ENCODE measurements at regions of chr7 and their contacts with region 1.

Region 1: GRCh38 chr7:151759591-151760042 is 117.3 kb downstream of the PRKAG2 start:
- DNase-seq: no peak
- ATAC-seq: peak; percentile 70
- H3K4me3 Mint-ChIP-seq: no peak overlapping the region
- H3K27ac Mint-ChIP-seq: no peak overlapping the region
- H3K4me1 Mint-ChIP-seq: peaks cover 11% of the 10 kb centered on the region
- H3K27me3 Mint-ChIP-seq: no peaks in the 10 kb centered on the region
- CTCF ChIP-seq: no peak

Region 2: DNA sequence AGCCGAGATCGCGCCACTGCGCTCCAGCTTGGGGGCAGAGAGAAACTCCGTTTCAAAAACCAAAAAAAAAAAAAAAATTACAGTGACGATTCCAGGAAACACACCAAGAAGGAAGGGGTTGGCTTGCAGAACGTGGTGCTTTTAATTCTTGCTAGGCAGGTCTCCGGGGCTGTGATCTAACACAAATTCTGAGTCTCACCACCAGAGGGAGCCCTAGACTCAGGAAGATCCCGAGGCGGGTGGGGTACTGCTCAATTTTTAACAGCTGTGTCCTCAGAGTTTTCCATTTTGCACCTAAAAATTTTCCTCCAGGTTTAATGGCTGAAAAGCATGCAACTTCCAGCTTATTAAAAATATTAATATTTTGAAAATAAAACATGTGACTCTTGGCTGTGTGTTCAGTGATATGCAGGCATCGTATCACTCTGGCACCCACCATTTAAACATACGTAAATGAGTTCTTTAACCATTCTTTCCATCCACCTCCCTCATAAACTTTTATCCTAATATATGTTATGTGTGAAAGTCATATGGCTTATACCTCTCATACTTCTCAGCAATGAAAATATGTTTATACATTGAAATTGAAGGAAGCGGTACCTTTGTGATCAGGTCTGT is 444.5 kb before region 1 on chr7:
- CTCF ChIA-PET with region 1: interaction called, 7 read pairs
- POLR2A ChIA-PET with region 1: interaction called, 3 read pairs
- intact Hi-C with region 1: loop called (anchors 1 kb)
- DNase-seq: peak; percentile 41
- ATAC-seq: peak; percentile 87
- H3K4me3 Mint-ChIP-seq: no peak overlapping the region
- H3K27ac Mint-ChIP-seq: no peak overlapping the region
- H3K4me1 Mint-ChIP-seq: peaks cover 2% of the 10 kb centered on the region
- H3K27me3 Mint-ChIP-seq: no peaks in the 10 kb centered on the region
- CTCF ChIP-seq: no peak

Region 3: GRCh38 chr7:151448261-151449252 is 311.1 kb before region 1 on chr7:
- CTCF ChIA-PET with region 1: interaction called, 11 read pairs
- POLR2A ChIA-PET with region 1: no interaction called
- intact Hi-C with region 1: loop called (anchors 1 kb)
- DNase-seq: peak; percentile 70
- ATAC-seq: peak; percentile 86
- H3K4me3 Mint-ChIP-seq: peak overlapping the region; percentile 79
- H3K27ac Mint-ChIP-seq: no peak overlapping the region
- H3K4me1 Mint-ChIP-seq: peaks cover 3% of the 10 kb centered on the region
- H3K27me3 Mint-ChIP-seq: peaks cover 14% of the 10 kb centered on the region
- CTCF ChIP-seq: no peak

Region 4: DNA sequence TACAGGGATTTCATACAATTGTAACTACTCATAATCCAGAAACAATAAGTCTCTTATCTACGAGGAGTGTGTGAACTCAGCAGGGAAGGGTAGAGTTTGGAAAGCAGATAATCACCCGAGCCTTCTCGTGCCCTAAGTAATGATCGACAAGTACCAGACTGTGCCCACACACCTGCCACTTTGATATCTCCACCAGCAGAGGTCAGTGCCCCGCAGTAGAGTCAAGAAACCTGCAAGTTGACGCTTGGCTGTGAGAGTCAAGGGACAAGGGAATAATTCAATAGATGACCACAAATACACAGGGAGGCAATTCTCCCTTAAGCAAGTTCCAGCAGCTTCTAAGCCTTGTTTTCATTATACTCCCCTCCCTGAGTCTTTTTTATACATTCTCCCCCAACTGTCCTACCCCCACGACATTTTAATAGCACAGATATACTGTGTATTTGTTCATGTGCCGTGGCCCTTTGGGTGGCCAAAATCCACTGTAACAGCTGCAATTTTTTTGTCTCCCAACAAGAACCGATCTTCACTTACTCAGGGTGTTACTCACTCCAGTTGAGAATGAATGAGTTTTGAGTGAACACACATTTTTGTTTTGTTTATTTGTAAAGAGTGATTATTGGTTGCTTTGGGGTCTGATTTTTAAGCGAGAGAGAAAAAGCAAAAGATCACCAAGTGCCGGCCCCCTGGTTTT is 133.0 kb before region 1 on chr7:
- CTCF ChIA-PET with region 1: interaction called, 21 read pairs
- POLR2A ChIA-PET with region 1: no interaction called
- intact Hi-C with region 1: loop called (anchors 1 kb)
- DNase-seq: no peak
- ATAC-seq: peak; percentile 50
- H3K4me3 Mint-ChIP-seq: no peak overlapping the region
- H3K27ac Mint-ChIP-seq: no peak overlapping the region
- H3K4me1 Mint-ChIP-seq: peaks cover 11% of the 10 kb centered on the region
- H3K27me3 Mint-ChIP-seq: no peaks in the 10 kb centered on the region
- CTCF ChIP-seq: no peak

Region 5: DNA sequence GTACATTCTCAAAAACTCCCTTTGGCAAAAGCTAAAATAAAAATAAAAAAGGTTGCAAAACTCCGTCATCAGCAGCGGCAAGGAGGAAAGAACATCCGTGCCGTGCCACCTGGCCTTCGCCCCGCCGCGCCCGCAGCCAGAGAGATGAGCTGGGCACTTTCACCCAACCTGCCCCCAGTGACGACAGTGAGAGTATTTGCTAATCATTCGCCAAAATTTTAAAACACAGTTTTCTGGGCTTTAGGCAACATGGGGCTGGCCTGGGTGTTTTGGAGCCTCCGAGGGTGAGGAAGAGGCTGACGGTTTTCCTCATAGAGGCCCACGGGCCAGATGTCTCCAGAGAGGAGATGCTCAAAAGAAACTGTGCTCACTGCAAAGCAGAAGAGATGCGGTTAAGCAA is 10.9 kb before region 1 on chr7:
- CTCF ChIA-PET with region 1: interaction called, 12 read pairs
- POLR2A ChIA-PET with region 1: interaction called, 11 read pairs
- intact Hi-C with region 1: no loop called
- DNase-seq: no peak
- ATAC-seq: no peak
- H3K4me3 Mint-ChIP-seq: no peak overlapping the region
- H3K27ac Mint-ChIP-seq: no peak overlapping the region
- H3K4me1 Mint-ChIP-seq: peaks cover 3% of the 10 kb centered on the region
- H3K27me3 Mint-ChIP-seq: no peaks in the 10 kb centered on the region
- CTCF ChIP-seq: no peak

Region 6: GRCh38 chr7:151793531-151793951 is 33.9 kb after region 1 on chr7:
- CTCF ChIA-PET with region 1: no interaction called
- POLR2A ChIA-PET with region 1: no interaction called
- intact Hi-C with region 1: no loop called
- DNase-seq: no peak
- ATAC-seq: no peak
- H3K4me3 Mint-ChIP-seq: no peak overlapping the region
- H3K27ac Mint-ChIP-seq: no peak overlapping the region
- H3K4me1 Mint-ChIP-seq: peaks cover 46% of the 10 kb centered on the region
- H3K27me3 Mint-ChIP-seq: no peaks in the 10 kb centered on the region
- CTCF ChIP-seq: no peak

Region 7: GRCh38 chr7:153034791-153035190 is 1275.2 kb after region 1 on chr7:
- CTCF ChIA-PET with region 1: no interaction called
- POLR2A ChIA-PET with region 1: no interaction called
- intact Hi-C with region 1: no loop called
- DNase-seq: no peak
- ATAC-seq: no peak
- H3K4me3 Mint-ChIP-seq: no peak overlapping the region
- H3K27ac Mint-ChIP-seq: no peak overlapping the region
- H3K4me1 Mint-ChIP-seq: no peaks in the 10 kb centered on the region
- H3K27me3 Mint-ChIP-seq: no peaks in the 10 kb centered on the region
- CTCF ChIP-seq: no peak